A549 (cell line): ENCODE measurements at regions of chr10 and their contacts with region 1.

Region 1: GRCh38 chr10:95363303-95363912 is 72.6 kb upstream of the PDLIM1 start:
- DNase-seq: peak; percentile 70 to 76
- ATAC-seq: peak; percentile 62 to 87; a peak in 3 of 6 replicates
- H3K4me3 ChIP-seq: no peak overlapping the region
- H3K27ac ChIP-seq: peak overlapping the region; percentile 9 to 23; a peak in 1 of 6 replicates
- H3K4me1 ChIP-seq: peaks cover 14% of the 10 kb centered on the region
- CTCF ChIP-seq: peak; percentile 95
- EP300 ChIP-seq: no peak
- POLR2A ChIP-seq: no peak
- RAD21 ChIP-seq: peak; percentile 98 to 99

Region 2: DNA sequence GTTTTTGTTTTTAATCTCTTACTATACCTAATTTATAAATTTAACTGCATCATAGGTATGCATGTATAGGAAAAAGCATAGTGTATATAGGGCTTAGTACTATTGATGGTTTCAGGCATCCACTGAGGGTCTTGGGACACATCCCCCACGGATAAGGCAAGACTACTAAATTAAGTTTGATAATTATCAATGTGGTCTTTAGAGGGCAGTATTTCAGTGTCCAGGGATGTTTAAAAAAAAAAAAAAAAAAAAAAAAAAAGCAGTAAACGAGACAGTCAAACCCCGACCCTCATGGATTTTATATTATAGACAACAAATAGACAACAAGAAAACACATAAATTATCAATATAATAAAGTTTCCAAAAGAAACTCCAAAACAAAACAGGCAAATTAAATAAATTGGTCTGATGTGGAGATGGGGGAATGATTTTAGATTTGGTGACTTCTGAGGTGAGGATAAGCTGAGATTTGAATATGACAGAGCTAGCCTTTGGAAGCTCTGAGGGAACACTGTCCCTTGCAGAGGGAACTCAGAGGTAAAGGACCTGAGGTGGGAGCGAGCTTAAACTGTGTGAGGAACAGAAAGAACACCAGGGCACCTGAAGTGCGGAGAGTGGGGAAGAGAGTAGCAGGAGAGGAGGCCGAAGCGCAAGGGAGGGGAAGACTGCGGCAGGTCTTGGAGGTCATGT is 154.6 kb before region 1 on chr10:
- CTCF ChIA-PET with region 1: interaction called, 71 read pairs
- POLR2A ChIA-PET with region 1: no interaction called
- DNase-seq: peak in 1 of 2 experiments; percentile 37
- ATAC-seq: peak in 1 of 2 experiments; percentile 76; a peak in 4 of 6 replicates
- H3K4me3 ChIP-seq: no peak overlapping the region
- H3K27ac ChIP-seq: peak overlapping the region; percentile 61 to 84
- H3K4me1 ChIP-seq: peaks cover 21% of the 10 kb centered on the region
- CTCF ChIP-seq: peak; percentile 79
- EP300 ChIP-seq: no peak
- POLR2A ChIP-seq: no peak
- RAD21 ChIP-seq: peak; percentile 70 to 74

Region 3: DNA sequence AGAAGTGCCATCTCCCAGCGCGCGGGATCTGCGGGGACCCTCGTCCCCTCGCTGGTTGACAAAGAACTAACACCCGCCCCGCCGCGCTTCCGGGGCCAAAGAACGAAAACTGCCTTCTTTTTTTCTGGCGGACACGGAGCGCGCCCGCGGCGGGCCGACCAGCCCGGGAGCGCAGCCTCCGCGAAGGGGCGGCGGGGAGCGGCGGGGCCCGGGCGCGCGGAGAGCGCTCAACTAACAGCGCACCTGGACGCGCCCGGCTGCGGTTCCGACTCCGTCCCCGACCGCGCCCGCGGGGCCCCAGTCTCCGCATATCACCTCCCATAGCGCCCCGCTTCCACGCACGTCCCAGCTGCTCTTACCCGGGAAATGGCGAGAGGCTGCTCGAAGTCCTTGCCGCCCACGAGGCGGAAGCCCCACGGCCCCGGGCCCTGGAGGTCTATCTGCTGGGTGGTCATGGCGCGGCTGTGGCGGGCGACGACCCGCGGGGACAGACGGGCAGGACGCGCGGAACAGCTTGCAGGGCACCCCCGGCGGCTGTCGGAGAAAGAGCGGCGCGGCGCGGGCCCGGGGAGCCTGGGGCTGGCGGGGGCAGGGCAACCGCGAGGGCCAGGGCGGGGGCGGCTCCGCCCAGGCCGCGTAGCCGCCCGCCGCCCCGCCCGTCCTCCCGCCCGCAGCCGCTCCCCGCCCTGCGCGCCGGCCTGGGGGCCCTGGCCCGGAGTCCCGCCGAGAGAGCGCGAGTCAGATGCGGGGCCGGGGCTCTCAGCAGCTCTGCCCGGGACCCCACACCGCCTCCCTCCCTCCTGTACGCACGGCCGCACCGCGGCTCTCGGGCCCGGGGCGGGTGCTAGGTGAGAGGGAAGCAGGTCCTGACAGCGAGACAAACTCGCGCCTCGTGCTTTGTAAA is 72.7 kb before region 1 on chr10 and contains the start of gene PDLIM1:
- CTCF ChIA-PET with region 1: interaction called, 17 read pairs
- POLR2A ChIA-PET with region 1: no interaction called
- DNase-seq: peak; percentile 72 to 82
- ATAC-seq: peak; percentile 91 to 94
- H3K4me3 ChIP-seq: peak within 1 kb of the TSS; percentile 91
- H3K27ac ChIP-seq: peak within 1 kb of the TSS; percentile 97 to 98
- H3K4me1 ChIP-seq: peaks cover 35% of the 10 kb centered on the region
- CTCF ChIP-seq: peak; percentile 22; the same call in 1 of the 3 replicates
- EP300 ChIP-seq: no peak
- POLR2A ChIP-seq: peak; percentile 65
- RAD21 ChIP-seq: peak in 1 of 2 experiments; percentile 41; a peak in 2 of 5 replicates
- polyA plus RNA-seq, gene PDLIM1: 92.5 and 132 TPM in 2 replicates

Region 4: GRCh38 chr10:95341716-95342130 is 21.7 kb before region 1 on chr10:
- CTCF ChIA-PET with region 1: interaction called, 119 read pairs
- POLR2A ChIA-PET with region 1: no interaction called
- DNase-seq: no peak
- ATAC-seq: no peak
- H3K4me3 ChIP-seq: no peak overlapping the region
- H3K27ac ChIP-seq: no peak overlapping the region
- H3K4me1 ChIP-seq: peaks cover 8% of the 10 kb centered on the region
- CTCF ChIP-seq: no peak
- EP300 ChIP-seq: no peak
- POLR2A ChIP-seq: no peak
- RAD21 ChIP-seq: no peak

Region 5: DNA sequence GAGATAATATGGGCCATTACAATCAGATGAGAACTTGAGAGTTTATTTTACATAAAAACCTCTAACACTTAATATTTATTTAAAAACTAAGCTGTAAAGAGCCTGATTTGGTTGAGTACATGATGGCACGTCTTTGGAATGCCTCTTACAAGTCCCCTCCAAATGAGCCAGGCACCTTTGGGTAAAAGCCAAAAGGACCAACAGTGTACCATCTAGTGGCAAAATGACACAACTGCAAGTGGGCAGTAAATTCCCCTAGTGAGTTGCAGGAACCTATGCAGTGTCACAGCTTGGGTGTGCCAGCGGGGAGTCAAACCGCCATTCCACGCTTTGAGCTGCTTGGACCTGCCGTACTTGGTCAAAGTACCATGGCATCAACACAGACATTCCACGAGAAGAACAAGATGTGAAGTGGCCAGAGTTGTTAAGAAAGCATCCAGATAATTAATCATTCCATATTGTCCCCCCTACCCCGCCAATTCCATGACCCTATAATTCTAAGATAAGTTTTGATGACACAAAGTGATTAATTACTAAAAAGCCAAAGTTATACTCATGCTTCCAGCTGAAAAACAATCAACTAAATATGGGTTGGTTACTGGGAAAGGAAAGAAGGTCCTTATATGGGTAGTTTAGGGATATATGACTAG is 82.6 kb after region 1 on chr10:
- CTCF ChIA-PET with region 1: interaction called, 10 read pairs
- POLR2A ChIA-PET with region 1: no interaction called
- DNase-seq: peak; percentile 81 to 92
- ATAC-seq: peak; percentile 84 to 91
- H3K4me3 ChIP-seq: no peak overlapping the region
- H3K27ac ChIP-seq: peak overlapping the region; percentile 42 to 43; a peak in 4 of 6 replicates
- H3K4me1 ChIP-seq: peaks cover 17% of the 10 kb centered on the region
- CTCF ChIP-seq: peak; percentile 75
- EP300 ChIP-seq: no peak
- POLR2A ChIP-seq: no peak
- RAD21 ChIP-seq: peak; percentile 49 to 52; a peak in 4 of 5 replicates